ENCODE measurements at regions of chr2 and their contacts with region 1.

Region 1: DNA sequence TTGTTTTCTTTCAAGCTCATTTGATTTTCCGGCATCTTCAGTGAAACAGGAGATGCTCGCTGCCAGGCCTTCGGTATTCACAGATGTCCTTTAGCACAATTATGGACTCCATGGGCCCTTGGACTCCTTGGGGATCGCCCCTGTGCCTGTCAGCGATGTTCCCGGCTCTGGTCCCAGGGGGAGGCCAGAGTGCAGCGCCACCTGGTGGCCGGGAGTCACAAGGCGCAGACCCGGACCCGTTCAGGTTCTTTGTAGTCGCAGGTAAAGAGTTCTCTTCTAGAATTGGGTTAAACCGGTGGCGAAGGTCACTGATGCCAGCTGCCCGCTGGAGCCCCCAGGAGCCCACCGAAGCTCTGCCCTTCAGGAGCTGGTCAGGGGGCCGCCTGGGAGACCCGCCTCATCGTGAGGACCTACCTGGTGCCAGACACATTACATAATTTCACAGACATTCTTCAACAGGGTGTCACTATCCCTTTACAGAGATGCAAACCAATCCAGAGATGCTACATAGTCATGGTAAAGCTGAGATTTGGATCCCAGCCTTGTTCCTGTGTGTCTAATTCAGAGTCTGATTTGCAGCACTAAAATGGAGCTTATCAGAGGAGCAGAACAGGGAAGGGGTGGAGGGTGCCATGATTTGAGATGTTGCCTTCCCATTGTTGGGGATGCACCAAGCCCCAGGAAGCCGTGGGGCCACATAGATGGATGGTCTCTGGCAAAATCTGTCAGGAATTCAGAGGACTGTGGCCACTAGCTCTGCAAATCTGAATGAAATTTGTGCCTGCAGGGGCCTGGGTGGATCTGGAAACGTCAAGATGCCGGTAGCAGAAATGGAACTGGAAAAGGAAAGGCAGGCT is 6.0 kb upstream of the INPP5D start:
- DNase-seq: peak; percentile 76
- ATAC-seq: peak; percentile 76
- H3K4me3 Mint-ChIP-seq: no peak overlapping the region
- H3K27ac Mint-ChIP-seq: no peak overlapping the region
- H3K4me1 Mint-ChIP-seq: peaks cover 18% of the 10 kb centered on the region
- H3K27me3 Mint-ChIP-seq: peaks cover 18% of the 10 kb centered on the region

Region 2: DNA sequence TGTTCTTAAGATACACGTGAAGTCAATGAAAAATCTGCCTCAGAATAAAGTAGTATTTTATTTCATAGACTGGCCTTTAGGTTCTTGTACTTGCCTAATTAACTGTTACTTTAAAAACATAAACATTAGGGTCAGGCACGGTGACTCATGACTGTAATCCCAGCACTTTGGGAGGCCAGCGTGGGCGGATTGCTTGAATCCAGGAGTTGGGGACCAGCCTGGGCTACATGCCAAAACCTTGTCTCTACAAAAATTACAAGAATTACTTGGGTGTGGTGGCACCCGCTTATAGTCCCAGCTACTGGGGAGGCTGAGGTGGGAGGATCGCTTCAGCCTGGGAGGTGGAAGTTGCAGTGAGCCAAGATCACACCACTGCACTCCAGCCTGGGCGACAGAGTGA is 200.1 kb before region 1 on chr2:
- CTCF ChIA-PET with region 1: interaction called, 33 read pairs
- POLR2A ChIA-PET with region 1: no interaction called
- DNase-seq: no peak
- ATAC-seq: no peak
- H3K4me3 Mint-ChIP-seq: no peak overlapping the region
- H3K27ac Mint-ChIP-seq: no peak overlapping the region
- H3K4me1 Mint-ChIP-seq: no peaks in the 10 kb centered on the region
- H3K27me3 Mint-ChIP-seq: no peaks in the 10 kb centered on the region

Region 3: DNA sequence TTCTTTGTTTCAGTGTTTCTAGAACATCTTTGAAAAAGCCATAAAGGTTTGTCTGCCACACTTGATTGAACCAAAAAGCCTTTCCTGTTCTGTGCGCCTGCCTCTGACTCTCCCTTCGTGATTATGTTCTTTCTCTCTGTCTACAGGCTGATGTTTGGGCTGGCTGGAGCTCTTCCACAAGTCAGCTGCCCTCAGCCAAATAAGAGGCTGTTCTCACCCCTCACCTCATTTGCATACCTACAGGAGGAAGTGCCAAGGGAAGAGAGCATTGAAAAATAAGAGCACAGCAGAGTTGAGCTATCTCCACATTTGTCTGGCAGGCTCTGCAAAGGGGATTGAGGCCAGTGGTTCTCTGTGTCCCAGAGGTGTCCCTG is 21.8 kb after region 1 on chr2:
- CTCF ChIA-PET with region 1: interaction called, 19 read pairs
- POLR2A ChIA-PET with region 1: interaction called, 136 read pairs
- DNase-seq: peak; percentile 61
- ATAC-seq: peak; percentile 69
- H3K4me3 Mint-ChIP-seq: no peak overlapping the region
- H3K27ac Mint-ChIP-seq: no peak overlapping the region
- H3K4me1 Mint-ChIP-seq: peaks cover 44% of the 10 kb centered on the region
- H3K27me3 Mint-ChIP-seq: no peaks in the 10 kb centered on the region

Region 4: GRCh38 chr2:233100192-233100998 is 46.2 kb after region 1 on chr2:
- CTCF ChIA-PET with region 1: interaction called, 22 read pairs
- POLR2A ChIA-PET with region 1: no interaction called
- DNase-seq: peak; percentile 71
- ATAC-seq: peak; percentile 85
- H3K4me3 Mint-ChIP-seq: peak overlapping the region; percentile 52
- H3K27ac Mint-ChIP-seq: peak overlapping the region; percentile 78
- H3K4me1 Mint-ChIP-seq: peaks cover 70% of the 10 kb centered on the region
- H3K27me3 Mint-ChIP-seq: no peaks in the 10 kb centered on the region

Measured in activated CD8-positive, alpha-beta T cell treated with anti-CD3 and anti-CD28 coated beads, Interleukin-2, amount 10 ng/mL, durations not matched to agents 7 days and 5 days (primary cell).